Caco-2 (cell line): ENCODE measurements at regions of chr18 and their contacts with region 1.

Region 1: GRCh38 chr18:21179590-21180220 is 62.3 kb upstream of the GREB1L start:
- DNase-seq: peak; percentile 53 to 66
- H3K4me3 ChIP-seq: no peak overlapping the region
- H3K4me3 Mint-ChIP-seq: no peak overlapping the region
- H3K27ac Mint-ChIP-seq: no peak overlapping the region
- H3K4me1 ChIP-seq: peaks cover 30% of the 10 kb centered on the region
- H3K4me1 Mint-ChIP-seq: peaks cover 32% of the 10 kb centered on the region
- H3K27me3 ChIP-seq: no peaks in the 10 kb centered on the region
- H3K27me3 Mint-ChIP-seq: no peaks in the 10 kb centered on the region
- CTCF ChIP-seq: peak; percentile 74 to 75

Region 2: GRCh38 chr18:21012308-21012707 is 167.4 kb before region 1 on chr18:
- CTCF ChIA-PET with region 1: no interaction called
- POLR2A ChIA-PET with region 1: no interaction called
- intact Hi-C with region 1: loop called (anchors 1 kb)
- DNase-seq: no peak
- H3K4me3 ChIP-seq: no peak overlapping the region
- H3K4me3 Mint-ChIP-seq: no peak overlapping the region
- H3K27ac Mint-ChIP-seq: no peak overlapping the region
- H3K4me1 ChIP-seq: peaks cover 19% of the 10 kb centered on the region
- H3K4me1 Mint-ChIP-seq: peaks cover 18% of the 10 kb centered on the region
- H3K27me3 ChIP-seq: no peaks in the 10 kb centered on the region
- H3K27me3 Mint-ChIP-seq: no peaks in the 10 kb centered on the region
- CTCF ChIP-seq: no peak

Region 3: DNA sequence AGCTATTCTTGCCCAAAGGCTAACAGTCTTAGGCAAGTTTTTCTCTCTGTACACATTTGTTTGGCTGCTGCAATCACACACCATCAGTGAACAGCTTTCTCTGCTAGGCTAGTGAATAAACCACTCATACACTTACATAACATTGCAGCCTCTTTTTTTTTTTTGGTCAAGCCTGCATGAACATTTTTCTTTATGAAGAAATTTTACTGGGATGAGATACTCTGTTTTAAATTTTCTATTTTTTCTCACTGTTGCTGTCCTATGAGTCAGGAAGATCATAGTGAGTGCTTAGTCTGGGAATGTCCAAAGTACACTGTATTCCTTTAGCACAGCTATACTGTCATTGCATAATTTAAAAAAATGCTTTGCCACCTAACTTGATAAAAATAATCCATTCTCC is 126.6 kb before region 1 on chr18:
- CTCF ChIA-PET with region 1: no interaction called
- POLR2A ChIA-PET with region 1: no interaction called
- intact Hi-C with region 1: loop called (anchors 10 kb)
- DNase-seq: no peak
- H3K4me3 ChIP-seq: no peak overlapping the region
- H3K4me3 Mint-ChIP-seq: no peak overlapping the region
- H3K27ac Mint-ChIP-seq: no peak overlapping the region
- H3K4me1 ChIP-seq: peaks cover 7% of the 10 kb centered on the region
- H3K4me1 Mint-ChIP-seq: peaks cover 5% of the 10 kb centered on the region
- H3K27me3 ChIP-seq: no peaks in the 10 kb centered on the region
- H3K27me3 Mint-ChIP-seq: no peaks in the 10 kb centered on the region
- CTCF ChIP-seq: no peak